Activated CD4-positive, alpha-beta memory T cell treated with anti-CD3 and anti-CD28 coated beads for 36 hours (primary cell): ENCODE measurements at regions of chr3 and their contacts with region 1.

Region 1: DNA sequence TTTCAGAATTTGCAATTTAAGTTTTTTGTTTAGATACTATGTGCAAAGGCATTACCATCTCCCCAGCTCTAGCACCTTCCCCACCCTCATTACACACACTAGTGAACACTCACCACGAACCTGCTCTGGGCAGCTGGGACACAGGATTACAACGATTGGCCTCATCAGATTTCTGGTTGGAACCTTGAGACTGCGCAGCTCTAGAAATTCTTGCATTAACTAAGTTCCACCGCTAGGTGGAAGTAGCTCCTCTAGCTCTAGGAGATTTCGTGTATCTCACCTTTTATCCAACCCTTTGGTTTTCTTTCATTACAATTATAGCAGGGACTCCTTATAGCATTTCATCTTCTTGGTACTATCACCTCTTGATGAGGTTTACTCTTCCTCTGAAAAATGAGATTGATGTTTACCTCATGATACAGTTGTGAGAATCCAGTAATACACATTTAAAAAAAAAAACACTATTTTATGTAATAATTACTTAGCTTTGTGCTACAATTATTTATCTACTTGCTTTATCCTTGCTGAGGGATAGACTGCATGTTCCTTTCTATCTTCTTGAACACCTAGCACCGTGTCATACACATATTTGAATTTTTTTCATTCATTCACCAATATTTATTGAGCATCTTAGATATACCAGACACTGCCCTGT is 28.7 kb upstream of the PLOD2 start:
- DNase-seq: no peak
- H3K4me3 Mint-ChIP-seq: no peak overlapping the region
- H3K27ac Mint-ChIP-seq: no peak overlapping the region
- H3K4me1 Mint-ChIP-seq: no peaks in the 10 kb centered on the region
- H3K27me3 Mint-ChIP-seq: peaks cover 3% of the 10 kb centered on the region

Region 2: GRCh38 chr3:146100825-146101444 is 88.7 kb before region 1 on chr3:
- CTCF ChIA-PET with region 1: no interaction called
- POLR2A ChIA-PET with region 1: no interaction called
- intact Hi-C with region 1: no loop called
- DNase-seq: no peak
- H3K4me3 Mint-ChIP-seq: no peak overlapping the region
- H3K27ac Mint-ChIP-seq: no peak overlapping the region
- H3K4me1 Mint-ChIP-seq: no peaks in the 10 kb centered on the region
- H3K27me3 Mint-ChIP-seq: no peaks in the 10 kb centered on the region

Region 3: GRCh38 chr3:146326670-146327543 is 137.3 kb after region 1 on chr3:
- CTCF ChIA-PET with region 1: interaction called, 9 read pairs
- POLR2A ChIA-PET with region 1: no interaction called
- intact Hi-C with region 1: loop called (anchors 5 kb)
- DNase-seq: no peak
- H3K4me3 Mint-ChIP-seq: no peak overlapping the region
- H3K27ac Mint-ChIP-seq: no peak overlapping the region
- H3K4me1 Mint-ChIP-seq: no peaks in the 10 kb centered on the region
- H3K27me3 Mint-ChIP-seq: no peaks in the 10 kb centered on the region

Region 4: GRCh38 chr3:146577662-146578061 is 388.0 kb after region 1 on chr3:
- CTCF ChIA-PET with region 1: interaction called, 54 read pairs
- POLR2A ChIA-PET with region 1: no interaction called
- intact Hi-C with region 1: loop called (anchors 1 kb)
- DNase-seq: peak; percentile 20
- H3K4me3 Mint-ChIP-seq: no peak overlapping the region
- H3K27ac Mint-ChIP-seq: no peak overlapping the region
- H3K4me1 Mint-ChIP-seq: no peaks in the 10 kb centered on the region
- H3K27me3 Mint-ChIP-seq: no peaks in the 10 kb centered on the region